SK-MEL-5 (cell line): ENCODE measurements at regions of chr4 and their contacts with region 1.

Region 1: DNA sequence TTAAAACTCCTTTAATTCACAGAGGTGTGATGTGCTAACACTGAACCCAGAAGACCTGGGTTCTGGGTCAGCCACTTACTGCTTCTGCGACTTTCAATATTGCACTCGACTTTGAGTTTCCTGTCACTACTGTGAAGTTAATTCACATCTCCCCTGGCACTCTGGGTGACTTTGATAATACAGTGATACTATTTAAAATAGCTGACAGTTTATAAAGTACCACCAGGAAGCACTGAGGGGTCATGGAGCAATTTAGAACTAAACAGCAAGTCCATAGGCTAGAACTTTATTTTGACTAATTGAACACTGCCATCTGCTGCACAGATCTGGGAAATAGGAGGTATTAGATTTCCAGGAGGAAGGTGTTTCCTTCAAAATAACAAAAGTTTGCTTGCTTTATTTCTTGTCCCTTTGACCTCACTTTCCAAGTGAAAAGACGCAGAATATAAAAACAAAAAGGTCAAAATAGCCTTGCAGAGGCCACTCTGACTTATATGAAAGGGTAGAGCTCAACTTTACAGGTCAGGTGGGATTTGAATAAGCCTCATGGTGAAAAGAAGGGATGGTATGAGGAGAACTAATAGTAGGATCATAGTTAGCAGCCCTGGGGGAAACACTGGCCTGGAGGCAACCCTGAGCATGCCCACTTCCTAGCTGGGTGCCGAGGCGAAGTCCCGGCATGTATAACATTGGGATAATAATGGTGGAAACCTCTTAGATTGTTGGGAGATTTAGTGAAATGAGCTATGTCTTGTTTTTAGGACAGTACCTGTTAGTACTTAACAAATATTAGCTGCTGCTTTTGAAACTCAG is 53.4 kb downstream of the ZNF518B start:
- DNase-seq: peak; percentile 81

Region 2: GRCh38 chr4:10157478-10158332 is 246.1 kb before region 1 on chr4:
- in situ Hi-C with region 1: loop called (anchors 25 kb)
- DNase-seq: peak; percentile 92